PC-3 (cell line): ENCODE measurements at regions of chr1 and their contacts with region 1.

Region 1: DNA sequence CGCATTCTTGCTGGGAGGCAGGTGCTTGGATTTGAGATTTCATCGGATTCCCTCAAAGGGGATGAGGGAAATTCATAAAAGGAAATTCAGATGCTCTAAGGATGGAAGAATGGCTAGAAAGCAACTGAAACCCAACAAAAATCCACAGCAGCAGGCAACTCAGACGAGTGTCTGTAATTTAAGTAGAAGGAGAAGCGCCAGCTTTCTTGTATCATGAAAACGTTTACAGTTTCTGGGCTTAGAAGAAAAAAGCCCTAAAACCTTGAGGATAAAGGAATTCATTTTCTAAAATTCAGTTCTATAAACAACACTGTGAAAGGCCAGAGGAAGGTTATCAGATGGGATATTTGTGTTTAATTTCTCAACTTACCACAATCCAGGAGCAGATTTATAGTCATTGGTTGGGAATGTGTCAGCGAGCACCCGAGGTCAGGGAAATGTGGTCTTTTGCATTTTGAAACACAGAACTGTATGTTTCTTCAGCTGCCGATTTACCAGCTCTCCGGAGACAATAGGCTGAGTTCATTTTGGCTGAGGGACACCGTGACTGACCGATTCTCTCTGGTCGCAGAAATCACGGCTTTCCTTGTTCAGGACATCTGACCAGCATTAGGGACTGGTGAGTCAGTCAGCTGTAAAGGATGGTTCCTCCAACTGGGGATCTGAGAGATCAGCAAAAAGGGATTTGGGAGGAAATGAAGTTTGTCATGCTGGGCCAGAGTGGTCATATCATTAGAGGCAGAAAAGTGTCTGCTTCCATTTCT is 111.6 kb upstream of the ERRFI1 start:
- DNase-seq: peak; percentile 78
- ATAC-seq: peak; percentile 68
- H3K4me3 ChIP-seq: peak overlapping the region; percentile 36; the same call in 1 of the 2 replicates
- H3K27ac ChIP-seq: peak overlapping the region; percentile 69
- H3K4me1 ChIP-seq: peaks cover 35% of the 10 kb centered on the region
- H3K27me3 ChIP-seq: no peaks in the 10 kb centered on the region
- CTCF ChIP-seq: no peak

Region 2: DNA sequence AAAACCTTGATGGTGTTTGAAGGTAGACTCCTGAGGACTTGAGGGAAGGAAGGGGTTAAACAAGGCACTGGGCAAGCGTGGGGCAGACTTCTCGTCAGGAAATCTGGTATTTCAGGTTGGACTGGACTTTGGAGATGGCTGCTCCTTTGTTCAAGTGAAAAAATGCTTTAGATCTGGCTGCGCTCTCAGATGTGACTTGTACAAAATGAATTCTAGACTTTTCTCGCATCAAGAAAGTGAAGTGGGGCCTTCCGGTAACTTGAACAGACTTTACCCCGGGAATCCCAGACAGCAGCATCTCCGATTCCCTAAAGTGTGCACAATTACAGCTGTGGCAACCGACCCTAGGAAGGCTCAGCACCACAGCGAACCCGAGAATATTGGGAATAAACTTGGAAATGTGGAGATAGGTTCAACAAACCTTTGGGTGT is 67.3 kb before region 1 on chr1:
- CTCF ChIA-PET with region 1: no interaction called
- POLR2A ChIA-PET with region 1: no interaction called
- intact Hi-C with region 1: no loop called
- DNase-seq: peak; percentile 94
- ATAC-seq: peak; percentile 75
- H3K4me3 ChIP-seq: peak overlapping the region; percentile 58
- H3K27ac ChIP-seq: peak overlapping the region; percentile 92
- H3K4me1 ChIP-seq: peaks cover 22% of the 10 kb centered on the region
- H3K27me3 ChIP-seq: no peaks in the 10 kb centered on the region
- CTCF ChIP-seq: no peak

Region 3: DNA sequence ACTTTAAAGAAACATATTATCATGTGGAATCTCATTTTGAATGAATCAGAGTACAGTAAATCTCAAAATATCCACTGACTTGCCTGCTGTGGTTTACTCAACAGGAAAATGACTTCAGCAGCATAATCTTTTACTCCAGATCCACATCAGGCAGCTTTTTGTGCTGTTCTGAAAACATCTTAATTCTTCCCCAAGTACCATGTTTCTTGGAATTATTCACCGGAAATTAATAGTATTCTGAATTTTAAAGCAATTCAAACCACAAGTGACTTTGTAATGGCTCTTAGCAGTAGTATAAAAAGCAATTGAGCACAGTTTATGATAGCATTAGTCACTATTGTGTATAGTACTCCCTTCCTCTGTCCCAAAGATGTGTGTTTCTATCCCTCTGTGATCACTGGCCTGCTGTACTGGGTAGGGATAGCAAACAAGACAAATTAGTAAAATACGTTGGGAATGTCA is 47.4 kb before region 1 on chr1:
- CTCF ChIA-PET with region 1: no interaction called
- POLR2A ChIA-PET with region 1: interaction called, 17 read pairs
- intact Hi-C with region 1: loop called (anchors 5 kb)
- DNase-seq: peak; percentile 91
- ATAC-seq: peak; percentile 90
- H3K4me3 ChIP-seq: no peak overlapping the region
- H3K27ac ChIP-seq: peak overlapping the region; percentile 98
- H3K4me1 ChIP-seq: peaks cover 53% of the 10 kb centered on the region
- H3K27me3 ChIP-seq: no peaks in the 10 kb centered on the region
- CTCF ChIP-seq: no peak

Region 4: GRCh38 chr1:8154621-8155052 is 17.0 kb after region 1 on chr1:
- CTCF ChIA-PET with region 1: no interaction called
- POLR2A ChIA-PET with region 1: interaction called, 13 read pairs
- intact Hi-C with region 1: no loop called
- DNase-seq: peak; percentile 80
- ATAC-seq: peak; percentile 91
- H3K4me3 ChIP-seq: no peak overlapping the region
- H3K27ac ChIP-seq: peak overlapping the region; percentile 80
- H3K4me1 ChIP-seq: peaks cover 22% of the 10 kb centered on the region
- H3K27me3 ChIP-seq: no peaks in the 10 kb centered on the region
- CTCF ChIP-seq: no peak